ENCODE measurements at regions of chr10 and their contacts with region 1.

Region 1: GRCh38 chr10:88932539-88933256 is 19.9 kb downstream of the ACTA2 start:
- DNase-seq: peak; percentile 93
- H3K4me3 ChIP-seq: no peak overlapping the region
- H3K27ac ChIP-seq: no peak overlapping the region
- H3K4me1 ChIP-seq: peaks cover 24% of the 10 kb centered on the region
- H3K27me3 ChIP-seq: no peaks in the 10 kb centered on the region
- CTCF ChIP-seq: peak; percentile 93

Region 2: GRCh38 chr10:88687853-88688467 is 244.7 kb before region 1 on chr10:
- CTCF ChIA-PET with region 1: no interaction called
- POLR2A ChIA-PET with region 1: no interaction called
- intact Hi-C with region 1: loop called (anchors 10 kb)
- DNase-seq: peak; percentile 41
- H3K4me3 ChIP-seq: no peak overlapping the region
- H3K27ac ChIP-seq: no peak overlapping the region
- H3K4me1 ChIP-seq: peaks cover under 1% of the 10 kb centered on the region
- H3K27me3 ChIP-seq: no peaks in the 10 kb centered on the region
- CTCF ChIP-seq: peak; percentile 85

Region 3: DNA sequence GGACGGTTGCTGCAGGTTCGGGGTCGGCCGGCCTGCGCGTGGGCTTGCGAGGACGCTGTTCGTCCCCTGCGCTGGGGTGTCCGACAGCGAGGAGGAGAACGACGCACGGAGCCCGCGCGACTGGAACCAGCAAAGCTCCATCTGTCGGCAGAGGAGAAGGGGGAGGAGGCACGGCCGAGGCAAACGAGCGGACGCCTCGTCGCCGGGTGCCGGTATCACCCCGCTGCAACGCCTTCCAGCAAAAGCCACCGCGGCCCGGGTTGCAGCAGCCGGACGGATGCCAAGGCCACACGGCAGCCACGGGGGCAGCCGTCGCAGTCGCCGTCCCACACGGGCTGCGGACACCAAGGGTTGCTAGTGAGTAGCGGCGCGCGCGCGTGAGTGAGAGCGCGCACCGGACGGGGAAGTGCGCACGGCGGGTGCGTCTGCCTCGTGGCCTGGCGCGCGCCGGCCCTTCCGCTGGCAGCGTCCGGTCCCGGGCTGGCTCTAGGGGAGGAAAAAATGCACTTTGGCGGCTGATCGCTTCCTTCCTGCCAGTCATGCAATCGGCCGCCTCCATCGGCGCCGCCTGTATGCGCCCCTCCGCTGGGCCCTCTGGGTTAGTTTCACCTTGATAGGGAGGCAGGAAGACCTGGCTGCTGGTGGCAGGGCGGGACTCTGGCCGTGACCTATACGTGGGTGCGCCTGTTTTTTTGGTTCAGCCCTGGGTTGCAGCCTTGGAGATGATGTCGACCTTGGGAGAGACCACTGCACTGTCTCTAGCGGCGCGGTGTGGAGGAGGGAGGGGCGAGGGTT is 52.2 kb before region 1 on chr10:
- CTCF ChIA-PET with region 1: interaction called, 7 read pairs
- POLR2A ChIA-PET with region 1: no interaction called
- intact Hi-C with region 1: loop called (anchors 2 kb)
- DNase-seq: peak; percentile 84
- H3K4me3 ChIP-seq: peak overlapping the region; percentile 90
- H3K27ac ChIP-seq: peak overlapping the region; percentile 92
- H3K4me1 ChIP-seq: peaks cover 61% of the 10 kb centered on the region
- H3K27me3 ChIP-seq: no peaks in the 10 kb centered on the region
- CTCF ChIP-seq: peak; percentile 46

Region 4: DNA sequence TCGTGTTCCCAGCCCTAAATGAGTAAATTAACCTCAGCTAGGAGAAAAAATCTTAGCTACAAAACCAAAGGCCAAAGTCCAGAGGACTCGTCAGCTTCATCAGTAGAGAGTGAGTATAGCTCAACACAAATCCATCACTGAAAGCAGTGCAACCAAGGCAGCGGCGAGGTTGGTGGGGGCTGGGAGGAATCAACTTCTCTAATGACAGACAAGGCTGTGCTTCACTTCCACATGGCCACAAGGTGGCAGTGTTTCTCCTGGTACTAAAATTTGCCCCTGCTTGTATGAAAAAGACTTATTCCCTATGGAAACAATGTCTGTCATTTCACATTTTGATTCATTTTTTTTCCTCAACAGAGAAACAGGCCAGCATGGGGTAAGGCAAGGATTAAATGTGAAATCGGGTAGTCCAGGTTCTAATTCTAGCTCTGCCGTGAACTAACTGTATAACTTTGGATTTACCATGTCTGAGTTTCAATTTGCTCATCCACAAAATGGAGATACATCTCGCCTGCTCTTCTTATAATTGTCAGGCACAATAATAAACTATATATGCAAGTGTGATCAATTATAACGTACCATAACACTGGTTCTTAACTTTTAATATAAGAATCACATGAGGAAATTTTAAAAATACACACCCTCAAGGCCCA is 97.2 kb after region 1 on chr10:
- CTCF ChIA-PET with region 1: no interaction called
- POLR2A ChIA-PET with region 1: no interaction called
- intact Hi-C with region 1: loop called (anchors 2 kb)
- DNase-seq: peak; percentile 83
- H3K4me3 ChIP-seq: no peak overlapping the region
- H3K27ac ChIP-seq: no peak overlapping the region
- H3K4me1 ChIP-seq: peaks cover 20% of the 10 kb centered on the region
- H3K27me3 ChIP-seq: no peaks in the 10 kb centered on the region
- CTCF ChIP-seq: peak; percentile 89

Measured in A673 (cell line).